Ovary (tissue), 10 donors: ENCODE measurements at regions of chr5 and their contacts with region 1.

Region 1: DNA sequence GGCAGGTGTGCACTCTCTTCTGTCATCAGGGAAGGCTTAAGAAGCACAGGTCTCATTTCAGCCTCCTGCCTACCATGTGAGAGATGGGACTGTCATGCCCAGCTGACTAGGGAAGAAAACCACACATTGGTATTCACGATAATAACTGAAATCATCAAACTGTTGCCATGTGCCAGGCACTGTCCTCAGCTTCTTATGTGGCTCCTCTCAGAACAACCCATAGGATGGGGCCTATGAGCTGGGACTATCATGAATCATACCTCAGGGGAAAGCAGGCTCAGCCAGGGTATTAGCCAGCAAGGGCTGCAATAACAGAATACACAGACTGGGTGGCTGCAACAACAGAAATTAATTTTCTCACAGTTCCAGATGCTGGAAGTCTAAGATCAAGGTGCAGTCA is 3.3 kb downstream of the AFAP1L1 start:
- DNase-seq: no peak
- H3K4me3 ChIP-seq: no peak overlapping the region
- H3K27ac ChIP-seq: no peak overlapping the region
- H3K4me1 ChIP-seq: peaks cover 2% of the 10 kb centered on the region
- H3K27me3 ChIP-seq: no peaks in the 10 kb centered on the region
- CTCF ChIP-seq: no peak
- EP300 ChIP-seq: no peak
- POLR2A ChIP-seq: no peak

Region 2: DNA sequence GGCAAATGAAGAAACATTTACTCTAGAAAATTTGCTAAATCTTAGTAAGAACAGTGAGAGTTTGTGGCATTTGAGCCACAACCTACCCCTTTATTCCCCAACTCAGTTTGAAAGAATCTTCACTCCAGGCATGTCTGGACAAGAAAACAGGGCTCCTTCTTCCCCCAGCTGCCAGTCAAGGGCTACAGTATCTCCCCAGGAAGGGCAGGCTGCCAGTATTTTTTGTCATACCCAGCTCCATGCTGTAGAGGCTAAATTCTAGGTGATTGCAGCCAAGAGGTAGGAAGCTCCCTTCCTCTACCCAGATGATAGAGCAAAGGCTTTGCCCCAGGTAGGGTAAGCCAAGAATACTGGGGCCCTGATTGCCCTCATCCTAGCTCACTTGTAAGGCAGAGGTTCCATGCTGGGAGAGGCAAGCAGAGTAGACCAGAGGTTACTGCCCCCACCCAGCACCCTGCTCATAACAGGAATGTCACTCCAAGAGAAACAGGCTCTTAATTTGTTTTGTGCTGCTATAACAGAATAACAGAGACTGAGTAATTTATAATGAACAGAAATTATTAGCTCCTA is 50.3 kb after region 1 on chr5:
- intact Hi-C with region 1: loop called in 1 of 4 experiments (anchors 2 kb)
- DNase-seq: no peak
- H3K4me3 ChIP-seq: no peak overlapping the region
- H3K27ac ChIP-seq: no peak overlapping the region
- H3K4me1 ChIP-seq: peaks cover 7% of the 10 kb centered on the region
- H3K27me3 ChIP-seq: no peaks in the 10 kb centered on the region
- CTCF ChIP-seq: no peak
- EP300 ChIP-seq: no peak
- POLR2A ChIP-seq: no peak

Region 3: GRCh38 chr5:149917073-149917676 is 642.2 kb after region 1 on chr5:
- intact Hi-C with region 1: no loop called
- DNase-seq: no peak
- H3K4me3 ChIP-seq: no peak overlapping the region
- H3K27ac ChIP-seq: no peak overlapping the region
- H3K4me1 ChIP-seq: peaks cover 6% of the 10 kb centered on the region
- H3K27me3 ChIP-seq: no peaks in the 10 kb centered on the region
- CTCF ChIP-seq: no peak
- EP300 ChIP-seq: no peak
- POLR2A ChIP-seq: no peak